Mammary epithelial cell (primary cell): ENCODE measurements at regions of chr17 and their contacts with region 1.

Region 1: DNA sequence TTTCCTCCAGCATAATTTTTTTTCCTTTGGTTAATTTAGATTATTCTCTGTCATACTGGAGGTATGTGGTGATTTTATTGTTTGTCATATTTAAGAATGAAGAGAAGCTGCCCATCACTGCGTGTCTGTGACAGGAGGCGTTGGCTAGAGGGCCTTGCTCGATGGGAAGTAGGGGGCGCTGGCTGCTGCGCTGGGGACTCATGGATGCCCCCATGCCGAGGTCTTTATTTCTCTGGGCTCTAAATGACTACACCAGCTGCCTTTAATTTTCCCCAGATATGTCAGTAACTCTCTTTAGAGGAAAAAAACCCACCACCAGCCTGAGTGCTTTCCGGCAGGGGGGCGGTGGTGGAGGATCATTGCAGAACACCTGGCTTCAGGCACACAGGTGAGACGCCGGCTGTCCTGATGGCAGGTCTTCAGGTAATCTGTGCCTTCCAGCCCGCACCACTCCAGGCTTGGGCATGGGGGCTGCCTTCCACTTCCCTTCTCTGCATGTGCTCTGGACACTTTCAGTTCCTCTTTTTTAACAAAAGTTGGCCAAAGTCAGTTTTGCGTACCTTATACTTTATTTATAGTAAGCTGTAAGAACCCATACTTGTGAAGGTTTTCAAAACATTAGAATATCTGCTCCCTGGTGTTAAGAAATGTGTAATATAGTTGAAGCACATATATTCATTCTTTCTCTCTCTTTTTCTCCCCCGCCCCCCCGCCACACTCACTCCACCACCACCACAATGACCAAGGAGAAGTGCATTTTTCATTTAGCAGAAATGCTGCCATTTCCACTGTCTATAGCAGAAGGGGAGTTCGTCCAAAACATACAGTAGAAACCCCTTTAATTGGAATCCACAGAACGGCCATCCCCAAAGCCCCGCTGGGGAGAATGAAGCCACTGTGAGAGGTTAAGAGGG is 192.7 kb downstream of the RPTOR start:
- DNase-seq: no peak
- H3K4me3 ChIP-seq: no peak overlapping the region
- H3K27ac ChIP-seq: no peak overlapping the region
- H3K4me1 ChIP-seq: no peaks in the 10 kb centered on the region
- H3K27me3 ChIP-seq: no peaks in the 10 kb centered on the region
- CTCF ChIP-seq: no peak

Region 2: DNA sequence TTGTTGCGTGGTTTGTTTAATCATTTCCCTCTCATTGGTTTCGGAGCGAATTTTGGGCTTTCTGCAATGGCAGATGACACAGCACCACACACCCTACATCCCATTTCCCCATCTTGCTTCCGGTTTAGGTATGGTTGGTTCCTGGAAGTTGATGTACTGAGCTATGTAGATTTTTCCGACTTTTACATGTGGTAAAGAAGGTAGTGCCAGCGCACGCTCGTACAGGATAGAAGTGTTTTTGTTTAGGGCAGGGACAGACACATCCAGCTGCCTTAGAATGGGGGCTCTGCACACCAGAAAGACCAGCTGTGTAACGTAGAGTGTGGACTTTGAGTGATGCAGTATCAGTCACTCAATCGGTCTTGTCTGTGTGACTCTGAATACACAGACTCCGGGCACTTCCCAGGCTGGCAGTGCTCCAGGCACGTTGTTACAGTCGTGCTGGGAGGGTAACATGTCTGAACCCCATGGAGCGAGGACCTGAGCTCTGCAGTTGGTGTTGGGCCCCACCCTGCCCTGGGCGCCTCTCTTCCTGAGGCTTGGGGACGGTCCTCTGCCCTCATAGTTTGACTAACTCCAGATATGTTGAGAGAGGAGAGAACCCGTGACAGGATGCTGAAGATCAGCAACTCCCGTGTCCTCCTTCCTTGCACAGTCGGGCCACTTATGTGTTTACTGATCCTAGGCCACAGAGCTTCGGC is 82.2 kb after region 1 on chr17:
- CTCF ChIA-PET with region 1: no interaction called
- dilution Hi-C with region 1: loop called (anchors 5 kb)
- in situ Hi-C with region 1: no loop called
- intact Hi-C with region 1: no loop called
- DNase-seq: no peak
- H3K4me3 ChIP-seq: no peak overlapping the region
- H3K27ac ChIP-seq: no peak overlapping the region
- H3K4me1 ChIP-seq: peaks cover 4% of the 10 kb centered on the region
- H3K27me3 ChIP-seq: no peaks in the 10 kb centered on the region
- CTCF ChIP-seq: no peak